ENCODE measurements at regions of chr10 and their contacts with region 1.

Region 1: DNA sequence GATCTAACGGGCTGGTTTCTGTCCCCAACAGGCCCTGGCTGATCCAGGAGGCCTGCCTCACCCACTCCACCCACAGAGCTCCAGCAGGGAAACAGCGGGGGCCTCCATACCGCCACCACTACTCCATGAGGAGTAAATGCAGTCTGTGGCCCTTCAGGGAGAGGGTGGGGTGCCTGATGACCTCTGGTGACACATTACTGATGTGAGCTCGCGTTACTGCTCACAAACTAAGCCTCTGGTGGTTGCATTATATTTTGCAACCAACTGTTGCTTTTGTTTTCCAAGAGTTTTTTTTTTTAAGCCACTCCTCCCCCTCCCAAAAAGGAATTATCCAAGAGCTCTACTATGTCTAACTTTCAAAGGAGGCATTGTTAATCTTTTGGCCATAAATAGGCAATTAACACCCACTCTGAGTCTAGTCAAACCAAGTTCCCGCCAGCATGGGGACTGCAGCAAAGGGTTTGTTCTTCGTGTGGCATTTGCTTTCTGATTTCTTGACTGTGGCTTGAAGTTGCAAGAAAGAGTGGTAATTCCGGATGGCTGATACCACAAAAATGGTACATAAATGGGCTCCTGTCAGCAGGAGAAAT is 72.6 kb downstream of the FAM53B start:
- DNase-seq: peak; percentile 80 to 87 (median 86)
- ATAC-seq: peak; percentile 99
- H3K4me3 ChIP-seq: no peak overlapping the region
- H3K27ac ChIP-seq: 0 out of 3 replicates have a peak overlapping the region, but pooled peaks have one; percentile 28
- H3K4me1 ChIP-seq: peaks cover 22 to 49% of the 10 kb centered on the region in 2 experiments
- H3K27me3 ChIP-seq: no peaks in the 10 kb centered on the region
- CTCF ChIP-seq: peak; percentile 77 to 87 (median 82)
- EP300 ChIP-seq: no peak; the same call in 1 of the 2 replicates
- POLR2A ChIP-seq: no peak
- RAD21 ChIP-seq: peak; percentile 57 to 73; a peak in 3 of 4 replicates

Region 2: DNA sequence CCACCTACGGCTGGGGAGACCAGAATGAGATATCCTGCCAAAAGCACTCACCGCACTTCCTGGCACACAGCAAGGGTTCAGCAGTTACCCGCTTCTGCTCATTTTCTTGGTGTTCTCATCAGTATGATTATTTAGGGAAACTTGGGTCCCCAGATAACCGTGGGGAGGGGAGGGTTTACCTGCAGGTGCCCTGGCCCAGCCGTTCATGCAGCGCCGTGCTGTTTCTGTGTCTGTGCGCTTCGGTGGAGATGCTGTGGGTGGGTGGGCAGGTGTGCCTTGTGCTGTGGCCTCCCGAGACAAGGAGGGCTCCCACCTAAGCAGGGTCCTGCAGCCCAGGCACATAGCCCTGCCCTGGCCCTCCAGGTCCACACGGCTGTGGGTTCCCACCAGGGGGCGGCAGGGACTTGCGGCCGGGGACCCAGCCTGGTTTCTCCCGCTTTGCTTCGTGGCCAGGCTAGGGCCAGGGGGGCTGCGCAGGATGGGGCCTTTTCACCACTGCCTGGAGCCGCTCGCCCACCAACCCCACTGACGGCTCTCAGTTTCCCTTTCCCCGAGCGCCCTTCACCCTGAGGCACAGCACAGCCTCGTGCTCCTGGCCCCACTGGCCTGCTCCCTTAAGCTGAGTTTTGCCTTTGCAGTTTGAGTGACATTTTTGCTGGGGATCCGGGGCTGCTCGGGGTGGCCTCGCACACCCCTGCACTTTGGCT is 131.5 kb before region 1 on chr10:
- CTCF ChIA-PET with region 1: no interaction called
- POLR2A ChIA-PET with region 1: no interaction called
- in situ Hi-C with region 1: no loop called
- intact Hi-C with region 1: loop called (anchors 10 kb)
- DNase-seq: peak; percentile 61 to 79 (median 66)
- ATAC-seq: peak; percentile 96
- H3K4me3 ChIP-seq: no peak overlapping the region
- H3K27ac ChIP-seq: no peak overlapping the region
- H3K4me1 ChIP-seq: peaks cover 0 to 63% of the 10 kb centered on the region in 2 experiments; a peak in 2 of 5 replicates
- H3K27me3 ChIP-seq: peaks cover 0 to 17% of the 10 kb centered on the region in 2 experiments; a peak in 2 of 5 replicates
- CTCF ChIP-seq: peak; percentile 68 to 87 (median 74)
- EP300 ChIP-seq: no peak
- POLR2A ChIP-seq: no peak
- RAD21 ChIP-seq: peak; percentile 86 to 94

Region 3: DNA sequence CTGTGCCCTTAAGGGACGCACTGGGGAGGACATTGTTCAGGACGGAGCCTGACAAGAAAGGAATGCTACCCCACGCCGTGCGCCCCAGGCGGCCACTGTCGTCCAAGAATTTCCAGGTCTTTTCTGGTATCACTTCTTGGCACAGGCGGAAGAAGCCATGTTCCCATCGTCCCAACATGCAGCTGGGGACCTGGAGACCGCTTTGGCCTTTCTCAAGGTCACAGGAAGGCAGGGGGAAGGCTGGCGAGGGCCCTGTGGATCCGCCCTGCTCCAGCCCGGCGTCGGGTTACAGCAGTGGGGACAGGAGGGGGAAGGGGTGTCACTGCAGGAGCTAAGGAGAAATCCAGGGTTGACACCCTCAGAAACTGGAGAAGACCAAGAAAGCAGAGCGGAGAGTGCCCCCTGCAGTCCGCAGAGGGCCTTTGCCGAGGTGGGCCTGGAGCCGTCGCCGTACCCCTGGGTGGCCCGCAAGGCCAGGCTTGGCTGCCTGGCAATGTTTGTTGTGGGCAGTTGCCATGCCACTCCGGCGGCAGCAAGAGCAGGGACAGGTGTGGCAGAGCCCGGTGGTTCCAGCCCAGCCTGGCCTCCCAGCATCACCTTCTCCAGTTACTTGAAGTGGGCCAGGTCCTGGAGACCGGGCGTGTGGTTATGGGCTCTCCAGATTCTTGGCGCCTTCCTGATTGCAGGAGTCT is 105.9 kb before region 1 on chr10:
- CTCF ChIA-PET with region 1: no interaction called
- POLR2A ChIA-PET with region 1: no interaction called
- in situ Hi-C with region 1: no loop called
- intact Hi-C with region 1: loop called (anchors 5 kb)
- DNase-seq: peak; percentile 58 to 69 (median 66)
- ATAC-seq: peak; percentile 94
- H3K4me3 ChIP-seq: no peak overlapping the region
- H3K27ac ChIP-seq: no peak overlapping the region
- H3K4me1 ChIP-seq: peaks cover 0 to 18% of the 10 kb centered on the region in 2 experiments; a peak in 4 of 5 replicates
- H3K27me3 ChIP-seq: peaks cover 0 to 13% of the 10 kb centered on the region in 2 experiments; a peak in 3 of 5 replicates
- CTCF ChIP-seq: peak; percentile 66 to 71 (median 68)
- EP300 ChIP-seq: no peak
- POLR2A ChIP-seq: no peak
- RAD21 ChIP-seq: peak; percentile 38 to 71; a peak in 3 of 4 replicates

Region 4: DNA sequence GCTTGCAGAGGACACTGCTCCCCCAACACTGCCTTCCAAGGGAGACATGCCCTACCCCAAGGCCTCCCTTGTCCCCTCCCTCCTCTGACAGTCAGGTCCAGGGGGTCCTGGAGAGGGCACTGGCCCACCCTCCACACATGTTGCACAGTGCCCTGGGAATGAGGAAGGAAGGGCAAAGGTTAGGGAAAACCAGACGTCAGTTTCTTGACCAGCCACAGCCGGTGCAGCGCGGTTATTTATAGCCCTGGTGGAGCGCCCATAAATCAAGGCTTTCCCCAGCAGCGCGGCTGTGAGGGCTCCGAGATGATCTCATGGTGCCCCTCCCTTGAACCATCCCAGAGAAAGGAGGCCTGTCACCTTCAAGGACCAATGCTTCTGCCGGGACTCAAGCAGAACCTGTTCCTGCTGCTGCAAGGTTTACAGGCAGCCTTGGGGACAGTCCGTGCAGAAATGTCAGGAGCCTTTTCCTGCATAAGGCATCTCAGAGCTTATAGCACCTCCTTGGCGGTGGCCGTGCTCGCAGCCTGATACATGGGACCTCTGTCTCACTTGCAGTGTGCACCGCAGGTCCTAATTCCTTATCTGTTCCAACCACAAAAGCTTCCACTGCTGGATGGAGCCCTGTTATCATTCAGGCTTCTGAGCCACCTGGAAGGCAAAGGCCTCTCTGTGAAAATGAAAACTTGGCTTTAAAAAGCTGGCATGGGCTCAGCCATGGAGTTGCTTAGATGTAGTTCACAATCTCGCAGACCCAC is 82.7 kb before region 1 on chr10:
- CTCF ChIA-PET with region 1: interaction called, 3 read pairs
- POLR2A ChIA-PET with region 1: no interaction called
- in situ Hi-C with region 1: no loop called
- intact Hi-C with region 1: loop called (anchors 1 kb)
- DNase-seq: peak; percentile 73 to 87 (median 78)
- ATAC-seq: peak; percentile 95
- H3K4me3 ChIP-seq: no peak overlapping the region
- H3K27ac ChIP-seq: peak overlapping the region; percentile 37; the same call in 2 of the 3 replicates
- H3K4me1 ChIP-seq: peaks cover 15 to 40% of the 10 kb centered on the region in 2 experiments
- H3K27me3 ChIP-seq: peaks cover 0 to 13% of the 10 kb centered on the region in 2 experiments; a peak in 3 of 5 replicates
- CTCF ChIP-seq: no peak
- EP300 ChIP-seq: peak; percentile 78
- POLR2A ChIP-seq: no peak
- RAD21 ChIP-seq: no peak

Region 5: DNA sequence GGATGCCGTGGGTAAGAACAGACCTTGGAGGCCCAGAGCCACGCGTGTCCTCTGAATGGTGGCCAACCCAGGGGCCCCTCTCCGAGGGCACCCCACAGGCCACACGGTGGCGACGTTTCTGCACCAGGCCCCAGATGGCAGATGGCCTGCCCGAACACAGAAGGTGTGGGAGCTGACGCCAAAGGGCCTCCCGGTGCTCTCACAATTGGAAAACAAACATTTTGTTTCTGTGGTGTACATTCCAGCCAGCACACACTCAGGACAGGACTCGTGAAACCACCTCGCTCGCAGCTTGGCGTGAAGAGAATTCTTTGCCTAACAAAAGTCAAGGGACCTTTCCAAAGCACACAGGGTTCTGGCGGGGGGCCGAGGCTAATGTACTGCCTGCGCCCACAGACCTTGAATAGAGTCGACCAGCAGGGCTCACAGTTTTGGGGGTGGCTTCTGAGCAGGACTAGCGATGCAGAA is 39.5 kb before region 1 on chr10:
- CTCF ChIA-PET with region 1: no interaction called
- POLR2A ChIA-PET with region 1: no interaction called
- in situ Hi-C with region 1: no loop called
- intact Hi-C with region 1: loop called (anchors 1 kb)
- DNase-seq: no peak
- ATAC-seq: peak; percentile 44
- H3K4me3 ChIP-seq: no peak overlapping the region
- H3K27ac ChIP-seq: no peak overlapping the region
- H3K4me1 ChIP-seq: peaks cover 13 to 47% of the 10 kb centered on the region in 2 experiments; a peak in 4 of 5 replicates
- H3K27me3 ChIP-seq: no peaks in the 10 kb centered on the region
- CTCF ChIP-seq: peak; percentile 22 to 41 (median 32); a peak in 4 of 6 replicates
- EP300 ChIP-seq: no peak
- POLR2A ChIP-seq: no peak
- RAD21 ChIP-seq: peak in 1 of 2 experiments; percentile 55; a peak in 3 of 4 replicates

Region 6: DNA sequence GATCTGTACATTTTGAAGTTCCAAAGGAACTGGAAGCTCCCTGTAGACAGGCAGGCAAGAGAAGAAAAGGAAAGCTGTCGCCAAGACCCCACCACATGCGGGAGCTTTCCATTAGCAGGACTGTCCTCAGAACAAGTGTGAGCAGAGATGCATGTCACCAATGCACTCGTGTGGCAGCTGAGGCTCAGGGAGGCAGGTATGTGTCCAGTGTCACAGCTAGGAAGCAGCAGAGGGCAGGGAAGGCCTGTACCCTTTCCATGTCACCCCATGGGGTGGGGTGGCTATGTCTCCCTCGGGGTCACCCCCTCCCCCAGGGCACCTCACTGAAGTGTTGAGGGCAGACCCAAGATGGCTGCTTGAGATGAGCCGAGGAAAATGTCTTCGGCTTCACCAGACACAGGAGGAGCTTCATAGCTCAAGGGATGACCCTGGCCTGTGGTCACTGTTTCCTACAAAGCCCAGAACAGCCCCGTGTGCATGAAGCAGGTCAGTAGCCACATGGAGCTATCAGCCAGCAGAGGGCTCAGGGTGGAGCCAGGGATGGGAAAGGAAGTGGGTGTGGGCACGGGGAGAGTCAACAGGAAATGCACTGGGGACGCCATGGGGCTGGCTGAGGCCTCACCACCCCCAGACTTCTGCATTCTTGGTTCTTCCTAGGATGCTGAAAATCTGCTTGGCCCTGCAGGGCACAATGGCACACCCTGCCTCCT is 24.0 kb before region 1 on chr10:
- CTCF ChIA-PET with region 1: no interaction called
- POLR2A ChIA-PET with region 1: no interaction called
- in situ Hi-C with region 1: no loop called
- intact Hi-C with region 1: loop called (anchors 2 kb)
- DNase-seq: peak; percentile 60 to 76 (median 66)
- ATAC-seq: peak; percentile 88
- H3K4me3 ChIP-seq: no peak overlapping the region
- H3K27ac ChIP-seq: peak overlapping the region; percentile 82
- H3K4me1 ChIP-seq: peaks cover 35 to 60% of the 10 kb centered on the region in 2 experiments
- H3K27me3 ChIP-seq: no peaks in the 10 kb centered on the region
- CTCF ChIP-seq: peak; percentile 40 to 45 (median 41); a peak in 4 of 6 replicates
- EP300 ChIP-seq: no peak
- POLR2A ChIP-seq: no peak
- RAD21 ChIP-seq: peak in 1 of 2 experiments; percentile 37; a peak in 3 of 4 replicates

Region 7: GRCh38 chr10:124688889-124689670 is 17.5 kb after region 1 on chr10:
- CTCF ChIA-PET with region 1: no interaction called
- POLR2A ChIA-PET with region 1: interaction called, 14 read pairs
- in situ Hi-C with region 1: no loop called
- intact Hi-C with region 1: no loop called
- DNase-seq: peak; percentile 18 to 70 (median 34)
- ATAC-seq: peak; percentile 51
- H3K4me3 ChIP-seq: no peak overlapping the region
- H3K27ac ChIP-seq: peak overlapping the region; percentile 33; the same call in 2 of the 3 replicates
- H3K4me1 ChIP-seq: peaks cover 47 to 48% of the 10 kb centered on the region in 2 experiments
- H3K27me3 ChIP-seq: no peaks in the 10 kb centered on the region
- CTCF ChIP-seq: no peak
- EP300 ChIP-seq: peak; percentile 49; the same call in 1 of the 2 replicates
- POLR2A ChIP-seq: no peak
- RAD21 ChIP-seq: no peak